HEK293 (cell line): ENCODE measurements at regions of chr18 and their contacts with region 1.

Region 1: GRCh38 chr18:54127759-54128378 is 96.6 kb downstream of the MBD2 start:
- H3K4me3 ChIP-seq: no peak overlapping the region
- H3K27ac ChIP-seq: no peak overlapping the region
- H3K4me1 ChIP-seq: no peaks in the 10 kb centered on the region
- CTCF ChIP-seq: no peak; the same call in 1 of the 2 replicates

Region 2: DNA sequence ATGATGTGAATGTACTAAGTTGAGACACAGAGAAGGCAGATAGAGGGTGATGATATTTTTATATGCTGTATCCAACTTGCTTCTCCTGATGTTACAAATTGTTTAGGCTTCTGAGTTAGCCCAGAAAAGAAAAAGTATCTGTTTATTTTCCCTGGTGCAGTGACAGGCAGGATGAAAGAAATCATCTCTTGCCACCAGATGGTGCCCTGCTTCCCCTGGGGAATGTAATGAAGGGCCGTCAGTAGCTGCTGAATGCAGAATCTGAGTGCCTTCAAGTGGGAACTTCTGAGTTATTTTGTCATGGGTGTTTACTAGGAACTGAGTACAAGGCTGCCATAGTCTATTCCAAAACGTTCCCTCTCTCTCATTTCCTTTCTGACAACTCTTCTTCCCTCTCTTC is 429.0 kb before region 1 on chr18:
- CTCF ChIA-PET with region 1: interaction called, 16 read pairs
- POLR2A ChIA-PET with region 1: no interaction called
- H3K4me3 ChIP-seq: no peak overlapping the region
- H3K27ac ChIP-seq: no peak overlapping the region
- H3K4me1 ChIP-seq: no peaks in the 10 kb centered on the region
- CTCF ChIP-seq: no peak

Region 3: DNA sequence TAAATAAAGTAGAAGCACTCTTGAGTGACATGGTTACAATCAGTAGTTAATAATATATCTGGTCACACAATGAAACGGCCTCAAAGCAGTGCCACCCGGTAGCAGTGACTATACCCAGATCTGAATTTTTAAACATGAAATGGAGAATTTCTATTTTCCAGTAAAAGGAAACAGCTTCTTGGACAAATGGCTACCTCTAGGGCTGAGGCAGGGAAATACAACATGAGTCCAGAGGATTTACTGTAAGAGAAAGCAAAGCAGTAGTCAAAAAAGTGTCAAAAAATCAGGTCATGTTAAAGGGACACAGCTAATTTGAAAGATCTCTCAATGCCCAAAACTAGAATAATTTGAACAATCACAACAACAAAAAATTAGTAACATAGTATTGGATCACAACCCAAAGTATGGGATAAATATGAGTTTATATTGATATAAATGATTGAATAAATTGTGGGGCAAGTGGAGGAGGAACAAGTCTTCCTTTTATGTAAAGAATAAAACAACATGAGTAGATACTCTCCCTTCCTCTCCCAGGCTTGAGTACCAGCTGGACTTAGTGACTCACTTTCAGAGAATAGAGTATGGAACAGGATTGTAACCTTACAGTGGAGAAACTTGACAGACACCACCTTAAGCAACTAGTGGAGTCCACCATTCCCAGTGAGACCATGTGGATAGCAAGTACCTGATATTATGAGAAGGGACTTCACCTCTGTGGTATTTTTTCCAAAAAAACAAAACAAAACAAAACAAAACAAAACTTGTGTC is 84.2 kb before region 1 on chr18:
- CTCF ChIA-PET with region 1: no interaction called
- POLR2A ChIA-PET with region 1: no interaction called
- H3K4me3 ChIP-seq: no peak overlapping the region
- H3K27ac ChIP-seq: no peak overlapping the region
- H3K4me1 ChIP-seq: no peaks in the 10 kb centered on the region
- CTCF ChIP-seq: no peak

Region 4: GRCh38 chr18:54109131-54109683 is 18.7 kb before region 1 on chr18:
- CTCF ChIA-PET with region 1: interaction called, 14 read pairs
- POLR2A ChIA-PET with region 1: no interaction called
- H3K4me3 ChIP-seq: no peak overlapping the region
- H3K27ac ChIP-seq: no peak overlapping the region
- H3K4me1 ChIP-seq: no peaks in the 10 kb centered on the region
- CTCF ChIP-seq: no peak